Left cardiac atrium (tissue), 4 donors: ENCODE measurements at regions of chr10 and their contacts with region 1.

Region 1: DNA sequence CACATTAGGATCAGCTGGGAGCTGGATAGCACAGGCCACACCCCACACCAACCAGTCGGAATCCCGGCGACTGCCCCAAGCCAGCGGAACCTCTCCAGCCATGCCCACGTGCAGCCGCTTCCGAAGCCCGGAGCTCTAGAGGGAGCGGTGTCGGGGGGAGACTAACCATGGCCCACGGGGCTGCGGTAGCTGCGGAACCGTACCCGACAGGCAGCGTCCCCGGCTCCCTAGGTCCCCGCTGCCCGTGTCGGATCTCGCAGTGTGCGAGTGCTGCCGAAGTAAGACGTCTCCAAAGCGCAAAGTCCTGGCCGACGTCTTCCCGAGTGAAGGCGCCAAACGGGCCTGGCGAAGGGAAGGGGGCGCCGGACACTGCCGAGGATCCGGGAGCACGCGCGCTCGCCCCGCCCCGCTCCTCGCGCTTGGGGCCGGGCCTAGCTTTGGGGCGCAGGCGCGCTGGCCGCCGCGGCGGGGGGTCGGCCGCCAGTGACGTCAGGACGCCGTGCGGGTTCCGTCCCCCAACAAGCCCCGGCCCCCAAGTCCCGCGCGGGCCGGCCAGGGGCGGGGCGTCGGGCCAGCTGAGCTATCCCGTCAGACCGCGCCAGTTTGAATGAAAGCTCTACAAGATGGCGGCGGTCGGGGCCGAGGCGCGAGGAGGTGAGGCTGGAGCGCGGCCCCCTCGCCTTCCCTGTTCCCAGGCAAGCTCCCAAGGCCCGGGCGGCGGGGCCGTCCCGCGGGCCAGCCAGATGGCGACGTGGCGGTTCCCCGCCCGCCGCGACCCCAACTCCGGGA is at the start of gene SUV39H2:
- DNase-seq: peak; percentile 96
- ATAC-seq: peak; percentile 97
- total RNA-seq, gene SUV39H2: 6.4 to 7.6 TPM

Region 2: GRCh38 chr10:14604181-14605142 is 274.0 kb before region 1 on chr10:
- intact Hi-C with region 1: loop called in 1 of 2 experiments (anchors 5 kb)
- DNase-seq: peak; percentile 85
- ATAC-seq: peak; percentile 94 to 96

Region 3: DNA sequence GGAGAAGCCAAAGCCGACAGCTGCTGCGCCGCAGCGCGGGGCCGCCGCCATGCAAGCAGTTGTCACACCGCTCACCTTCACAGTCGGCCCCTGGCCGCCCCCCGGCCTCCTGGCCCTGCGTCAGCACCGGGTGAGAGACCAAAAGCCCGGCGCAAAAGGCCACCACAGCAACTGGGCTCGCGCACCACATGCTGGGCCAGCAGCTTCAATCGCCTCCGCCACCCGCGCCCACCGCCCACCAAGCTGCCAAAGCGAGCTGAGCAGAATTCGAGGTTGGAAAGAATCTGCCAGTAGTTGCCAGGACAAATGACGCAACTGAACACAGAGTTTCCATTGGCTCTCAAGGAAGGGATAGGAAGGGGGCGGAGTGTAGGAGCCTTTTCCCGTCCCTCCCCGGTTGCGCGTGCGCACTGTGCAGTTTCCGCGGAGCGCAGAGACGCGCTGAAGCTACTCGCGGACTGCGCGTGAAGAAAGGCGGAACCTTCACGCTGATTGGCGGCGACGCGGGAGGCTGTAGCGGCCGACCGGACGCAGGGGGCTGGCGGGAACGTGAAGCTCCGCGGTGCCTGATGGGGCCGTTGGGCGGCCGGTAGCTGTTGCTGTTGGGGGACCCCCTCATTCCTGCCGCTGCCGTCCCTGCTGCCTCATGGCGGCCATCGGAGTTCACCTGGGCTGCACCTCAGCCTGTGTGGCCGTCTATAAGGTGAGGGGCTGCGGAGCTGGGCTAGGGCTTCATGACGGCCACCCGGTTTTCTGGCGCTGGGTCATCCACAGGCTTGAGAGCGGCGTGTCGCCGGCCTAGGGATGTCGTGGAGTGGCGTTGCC is 40.5 kb before region 1 on chr10 and contains the starts of genes CDNF, HSPA14 and MSANTD7:
- intact Hi-C with region 1: loop called in 1 of 2 experiments (anchors 2 kb)
- DNase-seq: peak; percentile 99
- ATAC-seq: peak; percentile 98 to 99
- total RNA-seq, gene CDNF: 1.3 to 1.6 TPM
- total RNA-seq, gene HSPA14: 7.0 to 10.5 TPM
- total RNA-seq, gene MSANTD7: 5.4 to 6.3 TPM

Region 4: DNA sequence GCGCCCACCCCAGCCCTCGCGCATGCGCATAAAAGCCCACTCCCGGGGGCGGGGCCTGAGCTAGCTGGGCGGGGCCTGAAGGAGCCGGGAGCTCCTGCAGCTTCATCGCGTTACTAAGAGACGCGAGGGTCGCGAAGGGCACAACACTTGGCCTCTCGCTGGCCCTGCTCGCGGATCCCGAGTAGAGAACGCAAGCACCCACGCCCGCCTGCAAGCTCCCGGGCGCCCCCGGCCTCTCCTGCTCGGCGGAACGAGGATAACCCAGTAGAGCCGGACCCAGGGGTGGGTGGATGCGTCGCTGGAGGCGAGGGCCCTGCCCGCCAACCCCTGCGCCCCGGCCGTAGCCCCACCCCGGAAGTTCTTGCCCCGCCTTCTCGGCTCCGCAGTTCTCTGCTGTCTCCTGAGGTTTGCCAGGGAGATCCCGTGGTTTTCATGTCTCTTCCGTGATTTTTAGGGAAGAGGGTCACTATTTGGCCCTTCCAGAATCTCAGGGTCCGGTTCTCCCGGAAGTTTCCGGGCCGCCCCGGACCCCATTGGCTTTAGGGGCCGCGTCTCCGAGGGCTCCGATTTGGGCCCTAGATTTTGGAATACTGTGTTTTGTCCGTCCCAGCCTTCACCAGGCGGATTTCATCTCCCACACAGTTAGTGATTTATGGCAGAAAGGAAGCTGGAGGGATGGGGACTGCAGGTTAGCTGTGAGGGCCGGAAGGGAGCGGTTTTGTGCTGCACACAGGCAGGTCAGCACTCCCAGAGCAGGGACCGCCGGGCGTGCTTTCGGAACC is 81.0 kb after region 1 on chr10 and contains the start of gene MEIG1:
- intact Hi-C with region 1: loop called in 1 of 2 experiments (anchors 10 kb)
- DNase-seq: peak; percentile 92
- ATAC-seq: peak; percentile 96 to 99
- total RNA-seq, gene MEIG1: not detected

Region 5: DNA sequence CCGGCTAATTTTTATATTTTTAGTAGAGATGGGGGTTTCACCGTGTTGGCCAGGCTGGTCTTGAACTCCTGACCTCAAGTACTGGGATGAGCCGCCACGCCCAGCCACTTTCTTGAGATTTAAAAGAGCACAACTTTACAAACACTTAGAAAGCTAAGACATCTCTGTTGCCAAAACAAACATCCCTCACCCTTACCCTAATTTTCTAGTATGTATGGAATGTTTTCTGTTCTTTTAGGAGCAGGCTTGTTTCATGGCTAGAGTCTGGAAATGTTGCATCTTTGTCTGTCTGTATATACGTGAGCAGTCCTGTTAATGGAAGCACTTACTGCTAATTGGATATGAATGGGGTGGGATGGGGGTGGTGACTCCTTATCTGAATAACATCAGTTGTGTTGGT is 168.2 kb after region 1 on chr10:
- intact Hi-C with region 1: no loop called
- DNase-seq: no peak
- ATAC-seq: no peak